AG04449 (cell line): ENCODE measurements at regions of chr6 and their contacts with region 1.

Region 1: DNA sequence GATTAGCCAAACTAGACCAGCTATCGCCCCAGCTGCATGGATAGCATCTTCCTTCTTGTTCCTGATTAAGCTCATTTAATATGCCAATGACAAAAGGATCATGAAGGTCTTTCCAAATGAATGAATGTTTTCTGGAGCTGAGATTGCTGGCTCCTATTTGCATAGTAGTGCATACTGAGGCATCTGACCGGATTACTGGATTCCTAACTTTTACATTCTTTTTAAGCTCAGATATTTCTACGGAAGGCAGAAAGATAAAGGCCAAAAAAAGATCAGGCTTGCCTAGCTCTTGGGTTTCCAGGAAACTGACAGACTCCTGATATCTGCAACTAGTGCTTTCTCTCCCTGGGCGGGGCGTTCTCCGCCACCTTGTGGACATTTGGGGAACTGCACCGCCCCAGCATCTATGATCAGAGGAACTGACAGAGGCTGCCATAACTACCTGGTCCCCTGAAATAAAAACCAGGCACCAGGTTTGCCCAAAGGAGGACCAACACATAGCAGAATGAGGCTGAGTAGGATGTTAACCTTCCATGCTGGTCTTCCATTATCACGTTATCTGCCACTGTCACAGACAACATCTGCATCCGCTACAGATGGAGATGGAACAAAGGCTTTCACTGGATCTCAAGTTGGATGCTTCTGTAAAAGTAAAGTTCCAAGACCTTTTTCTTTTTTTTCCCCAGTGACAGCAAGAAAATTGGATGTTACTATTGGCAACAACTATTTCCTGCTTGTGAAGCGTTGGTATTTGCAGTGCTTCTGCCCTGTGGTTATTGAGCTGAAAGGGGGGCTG is 33.2 kb downstream of the NT5E start:
- DNase-seq: peak; percentile 37
- H3K4me3 ChIP-seq: no peak overlapping the region
- CTCF ChIP-seq: peak; percentile 96

Region 2: GRCh38 chr6:85323435-85324040 is 159.6 kb before region 1 on chr6:
- CTCF ChIA-PET with region 1: interaction called, 23 read pairs
- POLR2A ChIA-PET with region 1: no interaction called
- DNase-seq: peak; percentile 54
- H3K4me3 ChIP-seq: no peak overlapping the region
- CTCF ChIP-seq: peak; percentile 83

Region 3: DNA sequence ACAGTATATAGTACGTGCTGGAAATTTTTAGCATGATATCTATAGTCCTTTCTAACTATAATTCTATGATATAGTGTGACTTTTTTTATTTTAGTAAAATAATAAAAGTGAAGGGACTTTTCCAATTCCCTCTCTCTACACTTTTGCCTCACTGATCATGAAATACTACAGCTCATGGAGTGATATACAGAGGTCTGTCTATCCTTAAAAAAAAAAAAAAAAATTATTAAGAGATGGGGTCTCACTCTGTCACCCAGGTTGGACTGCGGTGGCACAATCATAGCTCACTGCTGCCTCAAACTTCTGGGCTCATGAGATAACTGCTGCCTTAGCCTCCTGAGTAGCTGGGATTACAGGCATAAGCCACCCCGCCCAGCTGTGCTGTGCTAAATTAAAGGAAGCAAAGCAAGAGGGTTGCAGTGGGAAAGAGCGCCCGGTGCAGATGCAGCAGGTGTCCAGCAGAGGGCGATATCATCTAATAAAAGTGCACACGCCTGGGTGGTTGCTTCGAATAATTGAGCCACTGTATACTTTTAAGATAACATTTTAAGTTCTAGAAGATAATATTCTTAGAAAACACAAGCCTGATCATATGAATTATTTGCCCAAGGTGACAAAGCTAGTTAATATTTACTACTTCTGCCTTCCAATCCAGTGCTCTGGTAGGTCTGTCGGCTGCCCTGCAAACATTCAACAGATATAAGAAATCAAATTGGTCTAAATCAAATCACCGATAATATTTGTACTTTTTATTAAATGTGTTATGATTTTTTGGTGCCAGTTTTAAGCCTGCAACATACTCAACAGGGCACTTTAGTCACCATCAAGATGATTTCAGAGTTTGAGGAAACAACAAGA is 128.1 kb before region 1 on chr6:
- CTCF ChIA-PET with region 1: interaction called, 366 read pairs
- POLR2A ChIA-PET with region 1: interaction called, 3 read pairs
- DNase-seq: peak; percentile 12
- H3K4me3 ChIP-seq: no peak overlapping the region
- CTCF ChIP-seq: peak; percentile 77

Region 4: DNA sequence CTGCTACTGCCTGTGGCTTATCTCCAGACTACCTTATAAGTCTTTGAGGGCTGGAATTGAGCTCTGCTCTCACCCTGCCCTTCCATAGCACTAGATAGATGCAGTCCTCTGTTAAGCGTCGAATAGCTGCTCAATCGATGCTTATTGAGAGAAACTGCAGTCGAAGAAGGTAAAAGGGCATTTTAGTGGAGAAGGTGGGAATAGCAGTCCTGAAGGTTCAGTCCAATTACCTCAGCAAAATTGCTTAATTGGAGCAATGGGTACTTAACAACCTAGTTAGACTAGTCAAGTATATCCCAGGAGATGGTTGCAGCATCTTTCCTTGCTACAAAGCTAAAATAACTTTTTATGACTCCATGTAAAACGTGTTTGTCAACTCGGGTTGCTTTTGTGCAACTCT is 100.1 kb before region 1 on chr6:
- CTCF ChIA-PET with region 1: interaction called, 10 read pairs
- POLR2A ChIA-PET with region 1: no interaction called
- DNase-seq: no peak
- H3K4me3 ChIP-seq: no peak overlapping the region
- CTCF ChIP-seq: no peak

Region 5: DNA sequence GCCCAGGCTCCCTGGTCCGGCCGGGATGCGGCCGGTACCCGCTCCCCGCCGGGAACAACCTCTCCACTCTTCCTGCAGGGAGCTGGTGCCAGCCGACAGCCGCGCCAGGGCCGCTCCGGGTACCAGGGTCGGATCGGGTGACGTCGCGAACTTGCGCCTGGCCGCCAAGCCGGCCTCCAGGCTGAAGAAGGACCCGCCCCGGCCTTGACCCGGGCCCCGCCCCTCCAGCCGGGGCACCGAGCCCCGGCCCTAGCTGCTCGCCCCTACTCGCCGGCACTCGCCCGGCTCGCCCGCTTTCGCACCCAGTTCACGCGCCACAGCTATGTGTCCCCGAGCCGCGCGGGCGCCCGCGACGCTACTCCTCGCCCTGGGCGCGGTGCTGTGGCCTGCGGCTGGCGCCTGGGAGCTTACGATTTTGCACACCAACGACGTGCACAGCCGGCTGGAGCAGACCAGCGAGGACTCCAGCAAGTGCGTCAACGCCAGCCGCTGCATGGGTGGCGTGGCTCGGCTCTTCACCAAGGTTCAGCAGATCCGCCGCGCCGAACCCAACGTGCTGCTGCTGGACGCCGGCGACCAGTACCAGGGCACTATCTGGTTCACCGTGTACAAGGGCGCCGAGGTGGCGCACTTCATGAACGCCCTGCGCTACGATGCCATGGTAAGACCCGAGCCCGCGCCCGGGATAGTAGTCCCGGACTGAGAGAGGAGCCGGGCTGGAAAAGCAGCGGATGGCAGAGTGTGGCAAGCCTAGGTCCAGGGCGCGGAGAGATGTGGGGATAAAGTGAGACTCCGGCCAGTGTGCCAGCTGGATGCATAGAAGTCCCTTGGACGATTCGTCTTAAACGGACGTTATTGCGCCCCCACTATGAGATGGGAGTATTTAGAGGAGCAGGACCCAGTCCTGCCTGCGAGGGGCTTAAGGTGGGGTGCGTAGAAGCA is 33.0 kb before region 1 on chr6 and contains the start of gene NT5E:
- CTCF ChIA-PET with region 1: interaction called, 75 read pairs
- POLR2A ChIA-PET with region 1: interaction called, 12 read pairs
- DNase-seq: no peak
- H3K4me3 ChIP-seq: peak within 1 kb of the TSS; percentile 78
- CTCF ChIP-seq: peak; percentile 9

Region 6: GRCh38 chr6:85468261-85468660 is 14.8 kb before region 1 on chr6:
- CTCF ChIA-PET with region 1: interaction called, 115 read pairs
- POLR2A ChIA-PET with region 1: interaction called, 8 read pairs
- DNase-seq: no peak
- H3K4me3 ChIP-seq: no peak overlapping the region
- CTCF ChIP-seq: no peak

Region 7: GRCh38 chr6:85506441-85507093 is 23.5 kb after region 1 on chr6:
- CTCF ChIA-PET with region 1: interaction called, 30 read pairs
- POLR2A ChIA-PET with region 1: no interaction called
- DNase-seq: no peak
- H3K4me3 ChIP-seq: no peak overlapping the region
- CTCF ChIP-seq: no peak